ENCODE measurements at regions of chr22 and their contacts with region 1.

Region 1: GRCh38 chr22:40177738-40178416 is at the start of gene TNRC6B:
- DNase-seq: peak; percentile 95
- ATAC-seq: peak; percentile 87
- H3K4me3 ChIP-seq: peak within 1 kb of the TSS; percentile 60 to 80
- H3K27ac ChIP-seq: peak within 1 kb of the TSS; percentile 59
- H3K4me1 ChIP-seq: peaks cover 17 to 34% of the 10 kb centered on the region in 2 experiments
- H3K27me3 ChIP-seq: no peaks in the 10 kb centered on the region
- CTCF ChIP-seq: no peak
- POLR2A ChIP-seq: peak; percentile 98
- RAD21 ChIP-seq: peak; percentile 33
- total RNA-seq, gene TNRC6B: 29.8 TPM

Region 2: GRCh38 chr22:40044102-40044869 is 133.6 kb before region 1 on chr22:
- CTCF ChIA-PET with region 1: no interaction called
- POLR2A ChIA-PET with region 1: interaction called, 8 read pairs
- RAD21 ChIA-PET with region 1: interaction called in 1 of 2 experiments, 3 read pairs
- intact Hi-C with region 1: loop called (anchors 1 kb)
- DNase-seq: peak; percentile 98
- ATAC-seq: peak; percentile 91
- H3K4me3 ChIP-seq: peak overlapping the region; percentile 57 to 68
- H3K27ac ChIP-seq: peak overlapping the region; percentile 65
- H3K4me1 ChIP-seq: peaks cover 8 to 17% of the 10 kb centered on the region in 2 experiments
- H3K27me3 ChIP-seq: no peaks in the 10 kb centered on the region
- CTCF ChIP-seq: no peak
- POLR2A ChIP-seq: no peak
- RAD21 ChIP-seq: no peak

Region 3: DNA sequence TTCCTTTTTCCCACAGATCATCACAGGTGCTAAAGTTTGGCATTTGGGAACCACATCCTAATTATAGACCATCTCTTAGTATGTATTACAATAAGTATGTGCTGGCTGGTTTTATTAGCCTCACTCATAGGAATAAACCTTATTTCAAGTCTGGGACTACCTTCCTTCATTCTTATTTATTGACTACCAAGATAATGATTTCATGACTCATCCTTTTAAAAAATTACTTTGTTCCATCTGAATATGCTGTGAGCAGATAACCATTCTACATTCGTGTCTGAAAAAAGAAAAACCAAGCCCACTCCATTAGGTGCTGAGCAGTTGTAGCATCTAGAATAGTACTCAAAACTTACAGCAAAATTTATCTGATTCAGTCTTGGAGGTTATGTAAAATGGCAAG is 12.1 kb after region 1 on chr22:
- CTCF ChIA-PET with region 1: no interaction called
- POLR2A ChIA-PET with region 1: interaction called, 13 read pairs
- RAD21 ChIA-PET with region 1: no interaction called
- intact Hi-C with region 1: no loop called
- DNase-seq: no peak
- ATAC-seq: no peak
- H3K4me3 ChIP-seq: no peak overlapping the region
- H3K27ac ChIP-seq: no peak overlapping the region
- H3K4me1 ChIP-seq: no peaks in the 10 kb centered on the region
- H3K27me3 ChIP-seq: no peaks in the 10 kb centered on the region
- CTCF ChIP-seq: no peak
- POLR2A ChIP-seq: no peak
- RAD21 ChIP-seq: no peak

Measured in HCT116 (cell line).